Activated CD4-positive, alpha-beta T cell treated with anti-CD3 and anti-CD28 coated beads, Interleukin-2, amount 10 ng/mL, durations not matched to agents 24 days and 14 days (primary cell): ENCODE measurements at regions of chr10 and their contacts with region 1.

Region 1: DNA sequence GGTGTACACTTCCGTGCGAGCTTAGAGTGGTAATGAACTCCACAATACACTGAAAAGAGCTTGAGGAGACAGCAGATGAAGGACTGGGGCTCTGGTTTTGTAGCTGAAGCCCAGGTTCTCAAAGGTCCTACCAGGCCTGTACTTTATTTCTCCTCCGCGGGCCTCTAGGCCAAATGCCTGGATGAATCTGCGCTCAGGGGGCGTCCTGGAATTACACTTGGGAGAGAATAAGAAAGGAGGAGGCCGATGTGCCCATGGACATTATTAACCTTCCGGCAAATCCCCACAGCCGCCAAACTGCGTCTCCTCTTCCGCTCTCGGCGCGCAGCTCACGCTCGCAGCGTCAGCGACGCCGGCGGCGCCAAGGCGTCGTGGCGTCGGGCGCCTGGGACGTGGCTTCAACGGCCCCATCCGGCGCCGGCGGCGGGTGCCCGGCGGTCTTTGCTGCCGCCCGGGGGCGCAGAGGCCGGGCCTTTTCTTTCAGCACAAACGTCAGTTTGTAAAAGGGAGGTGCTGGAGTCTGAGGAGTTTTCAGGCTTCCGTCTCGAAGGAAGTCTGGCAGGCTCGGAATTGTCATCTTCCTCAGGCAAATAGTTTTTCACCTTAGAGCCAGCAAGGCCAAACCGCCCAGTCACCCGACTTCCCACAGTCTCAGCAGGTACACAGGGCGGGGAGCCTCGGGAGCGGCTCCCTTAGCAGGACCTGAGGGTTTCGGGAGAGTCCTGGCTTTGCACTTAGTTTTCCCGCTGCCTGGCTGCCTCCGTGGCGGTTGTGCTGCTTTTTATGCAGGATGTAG is at the start of gene CCDC7:
- DNase-seq: peak; percentile 96
- H3K4me3 Mint-ChIP-seq: peak within 1 kb of the TSS; percentile 96
- H3K27ac Mint-ChIP-seq: peak within 1 kb of the TSS; percentile 99
- H3K4me1 Mint-ChIP-seq: peaks cover 11% of the 10 kb centered on the region
- H3K27me3 Mint-ChIP-seq: peaks cover 4% of the 10 kb centered on the region
- total RNA-seq, gene CCDC7: 8.5 and 13.6 TPM in 2 replicates

Region 2: GRCh38 chr10:32149252-32149955 is 296.5 kb before region 1 on chr10:
- intact Hi-C with region 1: loop called (anchors 1 kb)
- DNase-seq: peak; percentile 80
- H3K4me3 Mint-ChIP-seq: peak overlapping the region; percentile 76
- H3K27ac Mint-ChIP-seq: peak overlapping the region; percentile 94
- H3K4me1 Mint-ChIP-seq: peaks cover 34% of the 10 kb centered on the region
- H3K27me3 Mint-ChIP-seq: no peaks in the 10 kb centered on the region

Region 3: DNA sequence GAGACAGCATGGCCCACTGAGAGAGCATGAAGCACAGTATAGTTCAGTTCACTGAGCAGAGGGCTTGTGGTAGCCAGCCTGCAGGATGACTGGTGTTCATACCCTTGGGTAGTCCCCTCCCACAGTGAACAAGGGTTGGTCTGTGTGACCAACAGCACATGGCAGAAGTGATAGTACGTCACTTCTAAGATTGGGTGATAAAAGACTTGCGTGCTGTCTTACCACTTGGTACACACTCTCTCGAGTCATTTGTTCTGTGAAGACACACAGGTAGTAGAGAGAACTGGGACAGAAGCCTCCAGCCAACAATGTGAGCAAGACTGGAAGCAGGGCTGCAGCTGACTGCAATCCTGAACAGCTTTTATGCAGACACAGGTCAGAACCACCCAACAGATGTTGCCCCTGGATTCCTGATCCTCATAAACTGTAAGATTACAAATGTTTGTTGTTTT is 113.6 kb before region 1 on chr10:
- intact Hi-C with region 1: loop called (anchors 5 kb)
- DNase-seq: peak; percentile 91
- H3K4me3 Mint-ChIP-seq: peak overlapping the region; percentile 75
- H3K27ac Mint-ChIP-seq: peak overlapping the region; percentile 91
- H3K4me1 Mint-ChIP-seq: peaks cover 76% of the 10 kb centered on the region
- H3K27me3 Mint-ChIP-seq: no peaks in the 10 kb centered on the region

Region 4: DNA sequence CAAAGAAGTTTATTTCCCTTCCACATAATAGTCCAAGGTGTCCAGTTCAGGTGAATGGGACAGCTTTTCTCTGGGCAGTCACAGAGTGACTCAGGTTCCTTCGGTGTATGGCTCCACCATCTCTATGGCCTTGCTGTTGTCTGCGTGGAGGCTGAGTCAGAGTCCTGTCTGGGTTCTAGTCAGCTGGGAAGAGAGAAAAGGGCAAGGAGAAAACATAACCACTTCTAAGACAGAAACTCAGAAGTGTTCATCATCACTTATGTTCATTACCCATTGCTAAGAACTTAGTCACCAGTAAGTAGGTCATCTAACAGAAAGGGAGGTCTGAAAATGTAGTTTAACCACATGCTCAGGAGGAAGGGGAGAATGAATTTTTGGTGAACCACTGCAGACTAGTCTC is 32.4 kb before region 1 on chr10:
- intact Hi-C with region 1: loop called (anchors 1 kb)
- DNase-seq: no peak
- H3K4me3 Mint-ChIP-seq: no peak overlapping the region
- H3K27ac Mint-ChIP-seq: peak overlapping the region; percentile 1
- H3K4me1 Mint-ChIP-seq: peaks cover 6% of the 10 kb centered on the region
- H3K27me3 Mint-ChIP-seq: no peaks in the 10 kb centered on the region

Region 5: GRCh38 chr10:32958085-32959005 is 512.4 kb after region 1 on chr10 and contains the start of gene ITGB1:
- intact Hi-C with region 1: loop called (anchors 5 kb)
- DNase-seq: peak; percentile 96
- H3K4me3 Mint-ChIP-seq: peak within 1 kb of the TSS; percentile 86
- H3K27ac Mint-ChIP-seq: peak within 1 kb of the TSS; percentile 92
- H3K4me1 Mint-ChIP-seq: peaks cover 32% of the 10 kb centered on the region
- H3K27me3 Mint-ChIP-seq: peaks cover 9% of the 10 kb centered on the region
- total RNA-seq, gene ITGB1: 50.5 and 57.5 TPM in 2 replicates